Left lung (tissue), 14 donors: ENCODE measurements at regions of chr11 and their contacts with region 1.

Region 1: DNA sequence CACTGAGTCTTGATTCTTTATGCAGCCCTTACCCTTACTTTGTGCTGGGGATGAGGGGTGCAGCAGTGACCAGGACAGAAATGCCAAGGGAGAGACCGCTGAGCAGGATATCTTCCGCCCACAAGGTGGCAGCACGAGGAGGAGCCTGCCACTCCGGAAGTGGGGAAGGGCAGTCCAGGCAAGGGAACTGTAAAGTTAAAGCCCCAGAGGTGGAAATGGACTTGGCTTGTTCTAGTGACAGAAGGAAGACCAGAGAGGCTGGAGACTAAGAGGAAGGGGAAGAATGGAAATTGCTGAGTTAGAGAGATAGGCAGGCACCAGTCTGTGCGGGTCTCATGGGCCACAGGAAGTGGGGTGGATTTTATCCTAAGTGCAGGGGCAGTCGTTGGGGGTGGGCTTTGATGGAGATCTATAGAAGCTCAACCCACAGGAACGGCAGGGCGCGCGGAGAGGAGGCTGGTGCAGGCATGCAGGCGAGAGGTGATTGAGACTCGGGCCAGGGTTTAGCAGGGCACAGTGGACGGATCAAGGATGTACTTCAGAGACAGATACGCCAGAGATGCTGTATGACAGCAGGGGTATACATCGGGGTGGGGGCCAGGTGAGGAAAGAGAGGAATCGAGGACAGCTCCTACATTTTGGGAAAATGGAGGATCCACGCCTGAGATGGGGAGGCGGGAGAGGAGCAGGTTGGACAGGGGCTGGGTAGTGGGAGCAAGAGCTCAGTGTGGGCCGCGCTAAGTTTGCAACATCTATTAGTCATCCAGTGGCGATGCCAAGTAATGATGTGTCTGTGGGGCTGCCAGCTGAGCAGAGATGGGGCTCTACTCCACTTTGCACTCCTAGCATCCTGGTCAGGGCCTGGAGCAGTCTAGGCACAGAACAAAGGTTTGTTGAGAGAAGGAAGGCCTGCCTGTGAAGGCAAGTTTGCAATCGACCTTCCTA is 3.3 kb upstream of the GRK2 start:
- DNase-seq: peak; percentile 60 to 93 (median 84)
- ATAC-seq: peak; percentile 79
- H3K4me3 ChIP-seq: no peak overlapping the region
- H3K27ac ChIP-seq: peak overlapping the region; percentile 21 to 82
- H3K4me1 ChIP-seq: peaks cover 20 to 53% of the 10 kb centered on the region in 2 donors
- H3K27me3 ChIP-seq: peaks cover 0 to 6% of the 10 kb centered on the region in 2 donors
- CTCF ChIP-seq: peak; percentile 80 to 88

Region 2: DNA sequence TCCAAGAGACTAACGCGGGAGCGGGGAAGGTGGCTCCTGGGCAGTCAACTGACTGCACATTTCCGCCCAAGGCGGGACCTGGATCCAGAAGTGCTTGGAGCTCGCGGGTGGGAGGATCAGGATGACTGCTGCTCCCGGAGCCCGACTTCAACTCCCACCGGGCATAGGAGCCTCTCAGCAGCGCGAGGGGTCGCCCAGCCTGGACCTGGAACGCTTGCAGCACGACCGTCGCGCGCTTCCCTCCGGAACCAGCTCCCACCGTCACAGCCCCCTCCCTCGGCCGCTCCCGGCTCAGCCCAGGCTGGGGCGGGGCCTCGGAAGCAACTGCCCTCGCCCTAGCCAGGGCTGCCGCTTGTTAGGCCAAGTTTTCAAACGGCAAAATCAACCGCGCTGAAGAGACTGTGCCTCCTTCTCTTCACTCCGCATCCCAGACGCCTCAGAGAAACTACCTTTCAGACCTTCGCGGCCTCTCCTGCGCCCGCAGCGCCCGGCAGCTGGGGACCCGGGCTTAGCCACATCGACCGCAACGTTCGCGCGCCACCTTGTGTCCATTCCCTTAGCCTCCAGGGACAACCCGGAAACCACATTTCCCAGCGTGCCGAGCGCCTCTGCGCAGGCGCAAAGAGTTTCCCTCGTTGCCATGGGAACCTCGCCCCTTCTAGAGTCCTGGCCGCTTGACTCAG is 54.3 kb after region 1 on chr11:
- intact Hi-C with region 1: loop called in 1 of 2 experiments (anchors 2 kb)
- DNase-seq: peak; percentile 97 to 98 (median 98)
- ATAC-seq: peak; percentile 94
- H3K4me3 ChIP-seq: peak overlapping the region; percentile 80 to 88
- H3K27ac ChIP-seq: peak overlapping the region; percentile 98 to 99
- H3K4me1 ChIP-seq: peaks cover 0 to 31% of the 10 kb centered on the region in 2 donors
- H3K27me3 ChIP-seq: no peaks in the 10 kb centered on the region
- CTCF ChIP-seq: peak; percentile 87 to 96

Region 3: DNA sequence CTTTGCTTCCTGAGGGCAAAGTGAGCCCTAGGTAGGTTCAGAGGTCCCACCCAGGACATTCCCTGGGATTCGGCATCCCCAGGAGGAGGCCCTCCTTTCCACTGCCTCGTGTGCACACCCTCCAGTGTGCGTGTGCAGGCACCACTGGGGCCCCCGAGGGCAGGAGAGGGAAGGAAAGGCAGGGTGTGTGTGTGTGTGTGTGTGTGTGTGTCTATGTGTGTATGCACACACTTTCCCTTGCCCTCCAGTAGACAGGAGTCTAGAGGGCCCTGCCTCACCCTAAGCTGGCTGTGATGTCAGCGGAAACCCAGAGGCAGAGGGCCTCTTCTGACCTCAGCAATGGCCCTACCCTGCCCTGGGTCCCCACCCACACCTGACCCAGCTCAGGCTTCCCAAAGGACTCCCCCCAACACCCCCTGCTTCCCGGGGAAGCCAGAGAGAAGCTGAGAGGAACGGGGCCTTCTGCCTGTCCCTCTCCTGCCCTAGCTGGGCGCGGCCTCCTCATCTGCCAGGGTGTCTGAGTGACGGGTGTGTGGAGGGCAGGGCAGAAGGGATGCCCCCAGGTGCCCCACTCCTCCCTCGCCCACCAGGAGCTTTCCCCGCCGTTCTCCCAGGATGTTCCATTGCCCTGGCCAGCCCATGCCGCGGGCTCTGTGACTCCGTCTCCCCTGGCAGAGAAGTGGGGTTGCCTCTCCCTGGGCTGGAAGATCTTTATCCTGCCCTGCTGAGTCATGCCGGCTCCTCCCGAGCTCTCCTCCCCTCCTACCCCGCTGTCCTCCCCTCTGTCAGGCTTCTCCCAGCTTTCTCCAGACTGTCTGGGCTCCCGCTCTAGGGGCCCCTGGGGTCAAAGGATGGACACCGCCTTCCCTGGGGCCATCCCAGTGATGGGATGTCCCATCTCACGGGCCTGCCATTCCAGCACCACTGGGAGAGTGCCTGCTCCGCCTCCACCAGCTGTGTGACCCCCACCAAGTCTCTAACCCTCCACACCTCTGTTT is 116.4 kb after region 1 on chr11:
- intact Hi-C with region 1: loop called in 1 of 2 experiments (anchors 5 kb)
- DNase-seq: no peak
- ATAC-seq: no peak
- H3K4me3 ChIP-seq: no peak overlapping the region
- H3K27ac ChIP-seq: no peak overlapping the region
- H3K4me1 ChIP-seq: peaks cover 4 to 48% of the 10 kb centered on the region in 2 donors
- H3K27me3 ChIP-seq: no peaks in the 10 kb centered on the region
- CTCF ChIP-seq: no peak